ENCODE measurements at regions of chr15 and their contacts with region 1.

Region 1: GRCh38 chr15:67531379-67532059 is 10.6 kb downstream of the C15orf61 start:
- DNase-seq: no peak
- H3K4me3 ChIP-seq: no peak overlapping the region
- H3K4me3 Mint-ChIP-seq: no peak overlapping the region
- H3K27ac ChIP-seq: no peak overlapping the region
- H3K27ac Mint-ChIP-seq: no peak overlapping the region
- H3K4me1 ChIP-seq: no peaks in the 10 kb centered on the region
- H3K4me1 Mint-ChIP-seq: no peaks in the 10 kb centered on the region
- H3K27me3 ChIP-seq: no peaks in the 10 kb centered on the region
- H3K27me3 Mint-ChIP-seq: no peaks in the 10 kb centered on the region

Region 2: DNA sequence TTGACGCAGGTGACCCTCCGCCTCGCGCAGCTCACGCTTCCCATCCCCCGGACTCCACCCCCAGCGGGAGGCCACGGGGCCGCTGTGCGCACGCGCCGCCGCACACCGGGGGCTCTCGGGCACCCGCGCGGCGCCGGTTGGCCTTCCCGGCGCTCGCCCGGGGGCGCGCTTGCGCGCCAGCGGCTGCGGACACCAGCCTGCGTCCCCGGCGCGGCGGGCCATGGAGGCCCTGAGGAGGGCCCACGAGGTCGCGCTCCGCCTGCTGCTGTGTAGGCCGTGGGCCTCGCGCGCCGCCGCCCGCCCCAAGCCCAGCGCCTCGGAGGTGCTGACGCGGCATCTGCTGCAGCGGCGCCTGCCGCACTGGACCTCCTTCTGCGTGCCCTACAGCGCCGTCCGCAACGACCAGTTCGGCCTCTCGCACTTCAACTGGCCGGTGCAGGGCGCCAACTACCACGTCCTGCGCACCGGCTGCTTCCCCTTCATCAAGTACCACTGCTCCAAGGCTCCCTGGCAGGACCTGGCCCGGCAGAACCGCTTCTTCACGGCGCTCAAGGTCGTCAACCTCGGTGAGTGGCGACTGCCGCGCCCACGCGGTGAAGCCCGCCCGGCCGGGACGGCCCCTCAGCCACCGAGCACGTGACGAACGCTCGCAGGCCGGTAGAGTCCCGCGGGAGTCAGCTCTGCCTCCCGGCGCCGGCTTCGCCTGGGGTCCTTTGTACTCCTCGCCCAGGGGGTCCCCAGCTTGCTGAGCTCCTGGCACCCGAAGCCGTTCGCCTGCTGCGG is 10.3 kb before region 1 on chr15 and contains the start of gene C15orf61:
- CTCF ChIA-PET with region 1: no interaction called
- POLR2A ChIA-PET with region 1: interaction called, 13 read pairs
- intact Hi-C with region 1: no loop called
- DNase-seq: peak; percentile 86 to 89 (median 87)
- H3K4me3 ChIP-seq: peak within 1 kb of the TSS; percentile 64 to 93
- H3K4me3 Mint-ChIP-seq: peak within 1 kb of the TSS; percentile 90 to 96 (median 93)
- H3K27ac ChIP-seq: peak within 1 kb of the TSS; percentile 70
- H3K27ac Mint-ChIP-seq: peak within 1 kb of the TSS; percentile 93 to 97 (median 97)
- H3K4me1 ChIP-seq: peaks cover 33% of the 10 kb centered on the region
- H3K4me1 Mint-ChIP-seq: peaks cover 18 to 37% (median 26%) of the 10 kb centered on the region in 4 donors
- H3K27me3 ChIP-seq: no peaks in the 10 kb centered on the region
- H3K27me3 Mint-ChIP-seq: no peaks in the 10 kb centered on the region
- total RNA-seq, gene C15orf61: 9.5 to 13.4 TPM

Region 3: GRCh38 chr15:67542420-67543347 is 11.2 kb after region 1 on chr15 and contains the start of gene MAP2K5:
- CTCF ChIA-PET with region 1: no interaction called
- POLR2A ChIA-PET with region 1: interaction called, 12 read pairs
- intact Hi-C with region 1: no loop called
- DNase-seq: peak; percentile 75 to 84 (median 79)
- H3K4me3 ChIP-seq: peak within 1 kb of the TSS; percentile 67 to 81
- H3K4me3 Mint-ChIP-seq: peak within 1 kb of the TSS; percentile 94 to 98 (median 96)
- H3K27ac ChIP-seq: peak within 1 kb of the TSS; percentile 77
- H3K27ac Mint-ChIP-seq: peak within 1 kb of the TSS; percentile 90 to 100 (median 99)
- H3K4me1 ChIP-seq: peaks cover 49% of the 10 kb centered on the region
- H3K4me1 Mint-ChIP-seq: peaks cover 38 to 65% (median 51%) of the 10 kb centered on the region in 4 donors
- H3K27me3 ChIP-seq: no peaks in the 10 kb centered on the region
- H3K27me3 Mint-ChIP-seq: no peaks in the 10 kb centered on the region
- total RNA-seq, gene MAP2K5: 27.8 to 31.4 TPM

Region 4: DNA sequence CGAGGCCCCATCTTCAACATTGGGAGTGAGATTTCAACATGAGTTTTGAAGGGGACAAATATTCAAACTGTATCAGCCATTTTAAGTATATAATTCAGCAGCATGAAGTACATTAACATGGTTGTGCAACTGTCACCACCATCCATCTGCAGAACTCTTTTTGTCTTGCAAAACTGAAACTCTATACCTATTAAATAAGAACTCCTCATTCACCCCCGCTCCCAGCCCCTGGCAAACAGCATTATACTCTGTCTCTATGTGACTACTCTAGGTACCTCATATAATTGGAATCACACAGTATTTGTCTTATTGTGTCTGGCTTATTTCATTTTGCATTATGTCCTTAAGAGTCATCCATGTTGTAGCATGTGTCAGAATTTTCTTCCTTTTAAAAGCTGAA is 121.1 kb after region 1 on chr15:
- CTCF ChIA-PET with region 1: no interaction called
- POLR2A ChIA-PET with region 1: no interaction called
- intact Hi-C with region 1: no loop called
- DNase-seq: no peak
- H3K4me3 ChIP-seq: no peak overlapping the region
- H3K4me3 Mint-ChIP-seq: no peak overlapping the region
- H3K27ac ChIP-seq: no peak overlapping the region
- H3K27ac Mint-ChIP-seq: no peak overlapping the region
- H3K4me1 ChIP-seq: no peaks in the 10 kb centered on the region
- H3K4me1 Mint-ChIP-seq: peaks cover 0 to 1% (median 0%) of the 10 kb centered on the region in 4 donors
- H3K27me3 ChIP-seq: no peaks in the 10 kb centered on the region
- H3K27me3 Mint-ChIP-seq: no peaks in the 10 kb centered on the region

Region 5: DNA sequence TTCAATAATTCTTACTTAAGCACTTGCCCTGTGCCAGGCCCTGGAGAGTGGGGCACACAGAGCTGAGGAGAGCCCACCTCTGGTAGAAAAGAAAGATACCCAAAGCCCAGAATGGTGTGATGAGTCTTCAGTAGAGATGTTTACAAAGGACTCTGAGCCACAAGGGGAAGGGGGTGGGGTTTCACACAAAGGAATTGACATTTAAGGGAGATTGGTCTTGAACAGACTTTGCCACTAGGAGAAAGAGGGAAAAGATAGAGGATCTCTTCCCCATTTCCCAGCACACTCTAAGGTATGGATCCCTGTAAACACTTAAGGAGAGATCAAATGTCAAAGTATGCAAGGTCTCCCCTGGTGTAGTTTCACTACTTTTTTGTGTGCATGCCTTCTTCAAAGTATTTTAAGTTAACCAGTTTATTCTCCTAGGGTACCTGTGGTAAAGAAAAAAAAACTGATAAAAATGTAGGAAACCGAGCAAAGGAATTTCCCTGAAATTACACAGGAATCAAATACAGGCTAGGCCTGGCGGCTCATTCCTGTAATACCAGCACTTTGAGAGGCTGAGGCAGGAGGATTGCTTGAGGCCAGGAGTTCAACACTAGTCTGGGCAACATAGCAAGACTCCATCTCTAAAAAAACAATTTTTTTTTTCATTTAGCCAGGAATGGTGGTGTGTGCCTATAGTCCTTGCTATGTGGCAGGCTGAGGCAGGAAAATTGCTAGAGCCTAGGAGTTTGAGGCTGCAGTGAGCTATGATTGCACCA is 176.2 kb after region 1 on chr15:
- CTCF ChIA-PET with region 1: no interaction called
- POLR2A ChIA-PET with region 1: no interaction called
- intact Hi-C with region 1: no loop called
- DNase-seq: no peak
- H3K4me3 ChIP-seq: no peak overlapping the region
- H3K4me3 Mint-ChIP-seq: no peak overlapping the region
- H3K27ac ChIP-seq: no peak overlapping the region
- H3K27ac Mint-ChIP-seq: peak overlapping the region in 1 of 7 donors; percentile 4
- H3K4me1 ChIP-seq: no peaks in the 10 kb centered on the region
- H3K4me1 Mint-ChIP-seq: peaks cover 0 to 4% (median 2%) of the 10 kb centered on the region in 4 donors
- H3K27me3 ChIP-seq: no peaks in the 10 kb centered on the region
- H3K27me3 Mint-ChIP-seq: no peaks in the 10 kb centered on the region

Measured in CD4-positive, alpha-beta memory T cell (primary cell).